AG04449 (cell line): ENCODE measurements at regions of chr14 and their contacts with region 1.

Region 1: GRCh38 chr14:50106178-50106577 is 10.2 kb downstream of the VCPKMT start:
- DNase-seq: no peak
- H3K4me3 ChIP-seq: no peak overlapping the region
- CTCF ChIP-seq: no peak

Region 2: DNA sequence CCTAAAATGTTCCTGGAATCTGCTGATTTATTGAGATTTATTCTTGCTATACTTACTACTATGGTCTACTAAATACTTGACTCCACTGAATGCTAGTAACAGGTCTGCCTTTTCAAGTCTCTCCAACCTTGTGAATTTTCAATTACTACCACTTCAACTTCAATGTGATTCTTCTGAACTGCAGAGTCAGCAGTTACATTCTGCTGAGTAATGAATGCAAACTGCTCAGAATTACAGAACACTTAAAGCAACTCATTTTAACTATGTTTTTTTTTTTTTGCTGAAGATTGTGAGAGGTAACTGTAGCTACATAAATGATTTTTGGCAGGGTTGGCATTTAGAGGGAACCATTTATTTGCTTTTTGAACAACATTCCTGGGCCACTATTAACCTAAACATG is 171.5 kb before region 1 on chr14:
- CTCF ChIA-PET with region 1: no interaction called
- POLR2A ChIA-PET with region 1: no interaction called
- DNase-seq: no peak
- H3K4me3 ChIP-seq: no peak overlapping the region
- CTCF ChIP-seq: no peak

Region 3: GRCh38 chr14:50030036-50030435 is 76.1 kb before region 1 on chr14:
- CTCF ChIA-PET with region 1: no interaction called
- POLR2A ChIA-PET with region 1: no interaction called
- DNase-seq: no peak
- H3K4me3 ChIP-seq: no peak overlapping the region
- CTCF ChIP-seq: no peak

Region 4: DNA sequence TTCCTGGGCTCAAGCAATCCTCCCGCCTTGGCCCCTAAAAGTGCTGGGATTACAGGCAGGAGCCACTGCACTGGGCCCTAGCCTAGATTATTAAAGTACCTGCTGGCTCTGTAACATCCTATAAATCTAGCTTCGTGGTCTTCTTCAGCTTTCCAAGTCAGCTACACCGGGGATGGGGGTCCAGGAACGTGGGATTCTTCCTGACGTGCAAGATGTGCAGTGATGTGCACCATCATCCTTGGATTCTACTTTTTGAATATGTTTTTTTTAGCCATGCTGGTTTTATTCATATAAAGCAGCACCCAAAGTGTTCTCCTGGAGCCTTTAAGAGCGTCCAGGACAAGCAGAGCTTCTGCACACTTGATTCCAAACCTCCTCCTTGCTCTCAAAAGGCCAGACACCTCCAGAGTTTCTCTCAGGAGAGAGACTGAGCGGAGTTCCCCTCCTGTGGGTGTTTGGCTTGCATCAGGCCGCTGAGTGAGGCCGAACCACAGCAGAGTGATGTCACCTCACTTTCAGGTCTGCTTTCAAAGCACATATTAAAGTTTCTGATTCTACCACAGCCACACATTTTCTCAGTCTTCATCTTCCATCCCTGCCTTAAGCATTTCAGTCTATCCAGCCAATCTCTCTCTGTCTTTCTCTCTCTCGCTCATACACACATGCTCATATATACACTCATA is 23.3 kb before region 1 on chr14:
- CTCF ChIA-PET with region 1: interaction called, 11 read pairs
- POLR2A ChIA-PET with region 1: no interaction called
- DNase-seq: no peak
- H3K4me3 ChIP-seq: no peak overlapping the region
- CTCF ChIP-seq: no peak

Region 5: GRCh38 chr14:50321009-50321660 is 215.0 kb after region 1 on chr14:
- CTCF ChIA-PET with region 1: no interaction called
- POLR2A ChIA-PET with region 1: no interaction called
- DNase-seq: peak; percentile 82
- H3K4me3 ChIP-seq: peak overlapping the region; percentile 39
- CTCF ChIP-seq: peak; percentile 85